Lower leg skin (tissue), 4 donors: ENCODE measurements at regions of chr9 and their contacts with region 1.

Region 1: DNA sequence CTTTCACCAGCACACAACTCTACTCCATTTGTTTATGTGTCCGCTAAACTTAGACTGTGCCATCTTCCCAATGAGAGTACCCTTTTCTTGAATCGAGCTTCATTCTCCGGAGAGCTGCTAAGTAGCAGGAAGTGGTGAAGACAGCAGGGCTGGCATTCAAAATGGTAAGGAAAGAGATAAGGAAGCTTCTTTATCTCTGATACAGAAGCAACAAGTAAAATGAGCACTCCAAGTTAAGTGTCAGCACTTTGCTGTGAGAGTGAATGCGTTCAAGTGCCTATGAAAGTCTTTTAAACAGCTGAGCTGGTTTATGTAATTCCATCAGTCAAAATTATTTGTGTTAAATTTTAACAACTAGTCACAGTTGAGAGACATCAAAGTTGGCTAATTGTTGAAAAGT is 386.8 kb upstream of the PTPRD start:
- DNase-seq: no peak
- H3K4me3 ChIP-seq: no peak overlapping the region
- CTCF ChIP-seq: no peak
- POLR2A ChIP-seq: no peak

Region 2: GRCh38 chr9:10661376-10661775 is 338.3 kb before region 1 on chr9:
- intact Hi-C with region 1: loop called (anchors 5 kb)
- DNase-seq: no peak
- H3K4me3 ChIP-seq: no peak overlapping the region
- CTCF ChIP-seq: no peak
- POLR2A ChIP-seq: no peak